CD4-positive, alpha-beta T cell (primary cell): ENCODE measurements at regions of chr3 and their contacts with region 1.

Region 1: DNA sequence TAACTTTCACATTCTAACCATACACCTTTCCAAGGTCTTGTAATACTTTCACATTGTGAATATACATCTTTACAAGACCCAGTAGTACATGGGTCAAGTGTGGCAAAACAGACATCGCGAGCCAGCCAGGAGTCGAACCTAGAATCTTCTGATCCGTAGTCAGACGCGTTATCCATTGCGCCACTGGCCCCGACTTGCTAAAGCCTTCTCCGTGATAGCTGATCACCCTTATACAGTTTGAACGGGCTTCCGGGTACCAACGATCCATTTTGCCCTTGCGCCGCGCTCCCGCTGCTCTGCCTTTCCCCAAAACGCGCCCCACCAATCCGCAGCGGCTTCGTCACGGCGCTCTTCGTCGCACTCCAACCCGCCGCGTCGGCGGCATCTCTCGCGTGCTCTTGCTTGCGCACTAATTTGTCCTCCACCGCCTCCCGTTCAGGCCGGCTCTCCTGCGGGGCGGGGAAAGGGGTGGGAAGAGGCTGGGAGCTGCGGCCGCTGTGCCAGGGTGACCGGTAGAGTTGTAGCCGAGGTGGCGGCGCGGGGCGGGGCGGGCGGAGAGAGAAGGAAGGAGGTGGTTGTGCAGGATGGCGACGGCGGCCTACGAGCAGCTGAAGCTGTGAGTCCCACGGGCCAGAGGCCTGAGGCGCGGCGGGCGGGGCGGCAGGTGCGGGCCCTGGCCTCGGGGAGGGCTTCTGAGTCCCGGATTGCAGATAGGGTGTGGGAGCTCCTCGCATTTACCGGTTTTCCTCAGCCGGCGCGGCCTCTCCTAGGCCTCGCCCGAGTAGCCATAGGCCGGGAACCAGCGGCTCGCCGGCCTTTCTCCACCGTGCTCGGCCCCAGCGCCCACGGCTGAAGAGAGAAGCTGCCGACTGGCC is at the start of gene SACM1L:
- DNase-seq: peak; percentile 88 to 99 (median 93)
- ATAC-seq: peak; percentile 85
- H3K4me3 ChIP-seq: peak within 1 kb of the TSS; percentile 81
- H3K4me3 Mint-ChIP-seq: peak within 1 kb of the TSS; percentile 94
- H3K27ac ChIP-seq: peak within 1 kb of the TSS; percentile 90 to 91
- H3K27ac Mint-ChIP-seq: peak within 1 kb of the TSS; percentile 99
- H3K4me1 ChIP-seq: peaks cover 39% of the 10 kb centered on the region
- H3K4me1 Mint-ChIP-seq: peaks cover 69% of the 10 kb centered on the region
- H3K27me3 ChIP-seq: no peaks in the 10 kb centered on the region
- H3K27me3 Mint-ChIP-seq: peaks cover 7% of the 10 kb centered on the region
- CTCF ChIP-seq: no peak
- total RNA-seq, gene SACM1L: 41.9 to 44.3 TPM

Region 2: GRCh38 chr3:44654039-44654438 is 1035.1 kb before region 1 on chr3:
- CTCF ChIA-PET with region 1: no interaction called
- POLR2A ChIA-PET with region 1: no interaction called
- intact Hi-C with region 1: no loop called
- DNase-seq: no peak
- ATAC-seq: no peak
- H3K4me3 ChIP-seq: no peak overlapping the region
- H3K4me3 Mint-ChIP-seq: no peak overlapping the region
- H3K27ac ChIP-seq: no peak overlapping the region
- H3K27ac Mint-ChIP-seq: no peak overlapping the region
- H3K4me1 ChIP-seq: peaks cover under 1% of the 10 kb centered on the region
- H3K4me1 Mint-ChIP-seq: peaks cover 4% of the 10 kb centered on the region
- H3K27me3 ChIP-seq: no peaks in the 10 kb centered on the region
- H3K27me3 Mint-ChIP-seq: no peaks in the 10 kb centered on the region
- CTCF ChIP-seq: no peak

Region 3: GRCh38 chr3:45665101-45665572 is 24.0 kb before region 1 on chr3:
- CTCF ChIA-PET with region 1: interaction called, 27 read pairs
- POLR2A ChIA-PET with region 1: interaction called, 8 read pairs
- intact Hi-C with region 1: loop called (anchors 1 to 2 kb)
- DNase-seq: peak; percentile 40 to 90 (median 59)
- ATAC-seq: peak; percentile 54
- H3K4me3 ChIP-seq: peak overlapping the region; percentile 60
- H3K4me3 Mint-ChIP-seq: peak overlapping the region; percentile 89
- H3K27ac ChIP-seq: peak overlapping the region; percentile 37 to 71
- H3K27ac Mint-ChIP-seq: peak overlapping the region; percentile 88
- H3K4me1 ChIP-seq: peaks cover 26% of the 10 kb centered on the region
- H3K4me1 Mint-ChIP-seq: peaks cover 25% of the 10 kb centered on the region
- H3K27me3 ChIP-seq: no peaks in the 10 kb centered on the region
- H3K27me3 Mint-ChIP-seq: no peaks in the 10 kb centered on the region
- CTCF ChIP-seq: peak; percentile 77

Region 4: GRCh38 chr3:45677033-45677433 is 12.1 kb before region 1 on chr3:
- CTCF ChIA-PET with region 1: interaction called, 3 read pairs
- POLR2A ChIA-PET with region 1: interaction called, 26 read pairs
- intact Hi-C with region 1: no loop called
- DNase-seq: peak; percentile 41 to 85 (median 68)
- ATAC-seq: peak; percentile 100
- H3K4me3 ChIP-seq: peak overlapping the region; percentile 28
- H3K4me3 Mint-ChIP-seq: peak overlapping the region; percentile 73
- H3K27ac ChIP-seq: peak overlapping the region; percentile 71 to 83
- H3K27ac Mint-ChIP-seq: peak overlapping the region; percentile 91
- H3K4me1 ChIP-seq: peaks cover 21% of the 10 kb centered on the region
- H3K4me1 Mint-ChIP-seq: peaks cover 29% of the 10 kb centered on the region
- H3K27me3 ChIP-seq: no peaks in the 10 kb centered on the region
- H3K27me3 Mint-ChIP-seq: no peaks in the 10 kb centered on the region
- CTCF ChIP-seq: no peak

Region 5: GRCh38 chr3:45704301-45704943 is 15.3 kb after region 1 on chr3:
- CTCF ChIA-PET with region 1: interaction called, 11 read pairs
- POLR2A ChIA-PET with region 1: interaction called, 11 read pairs
- intact Hi-C with region 1: no loop called
- DNase-seq: no peak
- ATAC-seq: no peak
- H3K4me3 ChIP-seq: no peak overlapping the region
- H3K4me3 Mint-ChIP-seq: no peak overlapping the region
- H3K27ac ChIP-seq: no peak overlapping the region
- H3K27ac Mint-ChIP-seq: no peak overlapping the region
- H3K4me1 ChIP-seq: peaks cover 4% of the 10 kb centered on the region
- H3K4me1 Mint-ChIP-seq: peaks cover 53% of the 10 kb centered on the region
- H3K27me3 ChIP-seq: no peaks in the 10 kb centered on the region
- H3K27me3 Mint-ChIP-seq: no peaks in the 10 kb centered on the region
- CTCF ChIP-seq: no peak

Region 6: GRCh38 chr3:46006238-46007032 is 317.3 kb after region 1 on chr3:
- CTCF ChIA-PET with region 1: no interaction called
- POLR2A ChIA-PET with region 1: no interaction called
- intact Hi-C with region 1: no loop called
- DNase-seq: no peak
- ATAC-seq: no peak
- H3K4me3 ChIP-seq: no peak overlapping the region
- H3K4me3 Mint-ChIP-seq: no peak overlapping the region
- H3K27ac ChIP-seq: no peak overlapping the region
- H3K27ac Mint-ChIP-seq: no peak overlapping the region
- H3K4me1 ChIP-seq: no peaks in the 10 kb centered on the region
- H3K4me1 Mint-ChIP-seq: no peaks in the 10 kb centered on the region
- H3K27me3 ChIP-seq: no peaks in the 10 kb centered on the region
- H3K27me3 Mint-ChIP-seq: no peaks in the 10 kb centered on the region
- CTCF ChIP-seq: no peak

Region 7: GRCh38 chr3:46593274-46593862 is 904.2 kb after region 1 on chr3:
- CTCF ChIA-PET with region 1: no interaction called
- POLR2A ChIA-PET with region 1: no interaction called
- intact Hi-C with region 1: no loop called
- DNase-seq: no peak
- ATAC-seq: no peak
- H3K4me3 ChIP-seq: no peak overlapping the region
- H3K4me3 Mint-ChIP-seq: no peak overlapping the region
- H3K27ac ChIP-seq: no peak overlapping the region
- H3K27ac Mint-ChIP-seq: no peak overlapping the region
- H3K4me1 ChIP-seq: no peaks in the 10 kb centered on the region
- H3K4me1 Mint-ChIP-seq: no peaks in the 10 kb centered on the region
- H3K27me3 ChIP-seq: no peaks in the 10 kb centered on the region
- H3K27me3 Mint-ChIP-seq: no peaks in the 10 kb centered on the region
- CTCF ChIP-seq: no peak